CD4-positive, alpha-beta T cell (primary cell): ENCODE measurements at regions of chr11 and their contacts with region 1.

Region 1: GRCh38 chr11:10455637-10456487 is 798 bp downstream of the AMPD3 start:
- DNase-seq: peak; percentile 50 to 87 (median 75)
- ATAC-seq: peak; percentile 71
- H3K4me3 ChIP-seq: peak overlapping the region; percentile 66
- H3K4me3 Mint-ChIP-seq: peak overlapping the region; percentile 93
- H3K27ac ChIP-seq: peak overlapping the region; percentile 63 to 89
- H3K27ac Mint-ChIP-seq: peak overlapping the region; percentile 95
- H3K4me1 ChIP-seq: peaks cover 77% of the 10 kb centered on the region
- H3K4me1 Mint-ChIP-seq: peaks cover 78% of the 10 kb centered on the region
- H3K27me3 ChIP-seq: no peaks in the 10 kb centered on the region
- H3K27me3 Mint-ChIP-seq: no peaks in the 10 kb centered on the region
- CTCF ChIP-seq: no peak

Region 2: DNA sequence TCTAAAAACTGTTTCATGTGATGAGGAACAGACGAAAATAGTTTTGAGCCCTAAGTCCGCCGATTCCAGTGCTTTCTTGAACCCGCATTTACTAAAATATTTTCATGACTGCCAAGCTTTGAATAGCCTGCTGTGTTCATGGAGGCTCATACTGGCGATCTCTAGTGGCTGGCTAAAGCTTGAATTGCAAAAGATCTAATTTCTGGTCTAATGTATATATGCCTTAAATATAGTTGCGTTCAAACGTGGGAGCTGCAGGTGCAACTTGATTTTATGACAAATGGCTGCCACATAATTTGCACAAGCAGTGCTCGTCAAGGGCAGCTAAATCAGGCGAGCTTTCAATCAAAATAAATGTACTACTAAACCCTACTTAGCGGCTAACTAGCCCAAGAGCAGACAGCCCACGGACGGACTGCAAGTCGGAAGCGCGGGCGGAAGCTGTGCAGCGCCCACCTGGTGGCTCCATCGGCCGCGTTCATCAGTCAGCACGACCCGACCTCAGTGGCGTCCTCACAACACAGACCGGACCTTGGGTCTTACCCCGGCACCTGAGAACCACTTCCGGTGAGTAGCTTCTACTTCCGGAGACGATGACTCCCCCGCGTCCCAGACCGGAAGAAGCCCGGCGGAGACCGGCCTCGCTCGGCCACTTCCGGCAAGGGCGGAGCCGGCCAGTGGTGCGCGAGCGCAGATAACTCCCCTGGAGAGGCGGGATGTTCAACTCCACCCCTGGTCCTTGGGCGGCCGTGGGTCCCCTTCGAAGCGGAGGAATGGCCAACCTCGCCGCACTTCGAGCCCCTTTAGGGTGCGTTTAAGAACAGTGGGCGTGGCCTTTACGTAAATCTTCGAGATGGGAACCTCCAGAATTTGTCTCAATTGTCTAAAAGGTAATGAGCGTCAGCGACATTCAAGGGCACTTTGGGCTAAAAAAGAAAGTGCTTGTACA is 1767.2 kb before region 1 on chr11:
- CTCF ChIA-PET with region 1: no interaction called
- POLR2A ChIA-PET with region 1: no interaction called
- intact Hi-C with region 1: loop called in 1 of 2 experiments (anchors 5 kb)
- DNase-seq: peak; percentile 46 to 89 (median 77)
- ATAC-seq: peak; percentile 76
- H3K4me3 ChIP-seq: peak overlapping the region; percentile 73
- H3K4me3 Mint-ChIP-seq: peak overlapping the region; percentile 96
- H3K27ac ChIP-seq: peak overlapping the region; percentile 73 to 84
- H3K27ac Mint-ChIP-seq: peak overlapping the region; percentile 90
- H3K4me1 ChIP-seq: peaks cover 26% of the 10 kb centered on the region
- H3K4me1 Mint-ChIP-seq: peaks cover 43% of the 10 kb centered on the region
- H3K27me3 ChIP-seq: no peaks in the 10 kb centered on the region
- H3K27me3 Mint-ChIP-seq: no peaks in the 10 kb centered on the region
- CTCF ChIP-seq: no peak

Region 3: GRCh38 chr11:10122326-10123197 is 333.3 kb before region 1 on chr11:
- CTCF ChIA-PET with region 1: no interaction called
- POLR2A ChIA-PET with region 1: no interaction called
- intact Hi-C with region 1: no loop called
- DNase-seq: no peak
- ATAC-seq: no peak
- H3K4me3 ChIP-seq: no peak overlapping the region
- H3K4me3 Mint-ChIP-seq: no peak overlapping the region
- H3K27ac ChIP-seq: no peak overlapping the region
- H3K27ac Mint-ChIP-seq: no peak overlapping the region
- H3K4me1 ChIP-seq: no peaks in the 10 kb centered on the region
- H3K4me1 Mint-ChIP-seq: no peaks in the 10 kb centered on the region
- H3K27me3 ChIP-seq: no peaks in the 10 kb centered on the region
- H3K27me3 Mint-ChIP-seq: no peaks in the 10 kb centered on the region
- CTCF ChIP-seq: no peak

Region 4: GRCh38 chr11:10293423-10294289 is 162.2 kb before region 1 on chr11 and contains the start of gene SBF2:
- CTCF ChIA-PET with region 1: no interaction called
- POLR2A ChIA-PET with region 1: no interaction called
- intact Hi-C with region 1: loop called in 1 of 2 experiments (anchors 10 kb)
- DNase-seq: peak; percentile 60 to 91 (median 76)
- ATAC-seq: peak; percentile 70
- H3K4me3 ChIP-seq: peak within 1 kb of the TSS; percentile 65
- H3K4me3 Mint-ChIP-seq: peak within 1 kb of the TSS; percentile 89
- H3K27ac ChIP-seq: no peak within 1 kb of the TSS
- H3K27ac Mint-ChIP-seq: peak within 1 kb of the TSS; percentile 67
- H3K4me1 ChIP-seq: peaks cover 34% of the 10 kb centered on the region
- H3K4me1 Mint-ChIP-seq: peaks cover 37% of the 10 kb centered on the region
- H3K27me3 ChIP-seq: peaks cover 5 to 23% of the 10 kb centered on the region in 2 experiments
- H3K27me3 Mint-ChIP-seq: peaks cover 33% of the 10 kb centered on the region
- CTCF ChIP-seq: no peak
- total RNA-seq, gene SBF2: 14.2 to 15.2 TPM

Region 5: DNA sequence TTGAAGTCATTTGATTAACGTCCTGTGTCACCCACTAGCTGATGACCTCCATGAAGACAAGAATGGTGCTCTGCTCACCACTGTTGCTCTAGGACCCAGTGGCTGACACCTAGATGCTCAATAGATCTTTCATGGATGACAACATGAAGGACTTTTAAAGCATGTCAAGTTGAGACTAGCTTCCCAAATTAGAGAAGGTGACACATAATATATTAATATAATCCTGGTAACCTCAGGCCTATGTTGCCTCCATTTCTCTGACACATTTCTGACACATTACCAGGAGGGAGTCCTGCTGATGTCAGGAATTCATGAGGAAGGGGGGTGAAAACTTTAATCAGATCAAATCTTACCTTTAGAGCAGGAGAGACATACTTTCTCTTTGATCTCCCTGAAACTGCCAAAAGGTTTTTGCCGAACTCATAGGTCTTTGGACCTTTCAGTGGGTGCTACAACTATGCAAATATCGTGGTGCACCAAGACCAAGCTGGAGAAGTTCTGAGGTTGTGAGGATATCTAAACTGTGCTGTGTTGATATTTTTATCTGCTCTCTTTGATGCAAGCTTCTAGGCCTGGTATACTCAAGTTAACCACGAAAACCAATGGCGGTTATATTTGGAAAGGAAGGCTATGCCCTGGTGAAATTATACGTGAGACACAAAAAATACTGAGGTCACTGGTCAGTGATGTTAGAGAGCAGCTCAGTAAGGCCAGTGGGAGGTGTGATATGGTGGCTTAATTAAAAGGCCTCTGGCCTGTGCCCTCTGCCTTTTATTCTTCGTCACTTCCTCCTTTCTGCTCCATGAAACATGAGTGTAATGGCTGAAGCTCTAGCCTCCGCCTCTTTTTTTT is 14.0 kb before region 1 on chr11:
- CTCF ChIA-PET with region 1: interaction called, 7 read pairs
- POLR2A ChIA-PET with region 1: interaction called, 15 read pairs
- intact Hi-C with region 1: no loop called
- DNase-seq: peak in 2 of 14 experiments; percentile 23 to 30
- ATAC-seq: peak; percentile 50
- H3K4me3 ChIP-seq: no peak overlapping the region
- H3K4me3 Mint-ChIP-seq: peak overlapping the region; percentile 27
- H3K27ac ChIP-seq: no peak overlapping the region
- H3K27ac Mint-ChIP-seq: peak overlapping the region; percentile 64
- H3K4me1 ChIP-seq: peaks cover 24% of the 10 kb centered on the region
- H3K4me1 Mint-ChIP-seq: peaks cover 42% of the 10 kb centered on the region
- H3K27me3 ChIP-seq: no peaks in the 10 kb centered on the region
- H3K27me3 Mint-ChIP-seq: no peaks in the 10 kb centered on the region
- CTCF ChIP-seq: no peak

Region 6: DNA sequence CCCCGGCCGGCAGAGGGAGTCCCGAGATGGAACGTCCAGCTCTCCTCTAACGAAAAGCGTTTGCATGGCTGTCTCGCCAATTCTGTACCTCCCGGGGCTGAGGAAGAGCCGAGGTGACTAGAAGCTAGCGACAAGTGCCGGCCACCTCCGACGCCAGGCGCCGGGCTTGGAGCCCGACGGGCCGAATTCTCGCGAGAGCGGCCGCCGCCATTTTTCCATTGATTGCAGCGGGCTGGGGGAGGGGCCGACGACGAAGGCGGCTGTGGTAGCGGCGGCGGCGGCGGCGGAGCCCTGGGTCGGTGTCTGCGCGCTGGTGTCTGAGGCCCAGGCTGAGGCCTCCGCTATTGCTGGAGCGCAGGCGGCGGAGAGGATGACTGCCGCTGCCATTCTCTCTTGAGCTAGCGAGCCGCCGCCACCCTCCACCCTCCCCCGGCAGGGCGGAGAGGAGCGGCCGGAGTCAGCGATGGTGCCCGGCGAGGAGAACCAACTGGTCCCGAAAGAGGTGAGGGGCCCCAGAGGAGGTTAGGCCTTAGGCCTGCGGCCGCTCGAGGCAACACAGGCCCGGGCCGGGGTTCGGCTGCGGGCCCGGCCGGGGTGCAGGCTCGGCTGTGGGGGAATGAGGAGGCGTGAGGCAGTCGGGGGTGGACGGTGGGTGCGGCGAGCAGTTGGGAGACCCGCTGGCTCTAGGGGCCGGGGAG is 1386.0 kb after region 1 on chr11 and contains the start of gene USP47:
- CTCF ChIA-PET with region 1: no interaction called
- POLR2A ChIA-PET with region 1: no interaction called
- intact Hi-C with region 1: loop called in 1 of 2 experiments (anchors 5 kb)
- DNase-seq: peak; percentile 92 to 97 (median 94)
- ATAC-seq: peak; percentile 69
- H3K4me3 ChIP-seq: peak within 1 kb of the TSS; percentile 87
- H3K4me3 Mint-ChIP-seq: no peak within 1 kb of the TSS
- H3K27ac ChIP-seq: peak within 1 kb of the TSS; percentile 91 to 99
- H3K27ac Mint-ChIP-seq: no peak within 1 kb of the TSS
- H3K4me1 ChIP-seq: peaks cover 19% of the 10 kb centered on the region
- H3K4me1 Mint-ChIP-seq: peaks cover 3% of the 10 kb centered on the region
- H3K27me3 ChIP-seq: peaks cover 0 to 5% of the 10 kb centered on the region in 2 experiments
- H3K27me3 Mint-ChIP-seq: peaks cover 16% of the 10 kb centered on the region
- CTCF ChIP-seq: peak; percentile 62
- total RNA-seq, gene USP47: 97.0 to 100 TPM